Activated CD4-positive, alpha-beta T cell treated with anti-CD3 and anti-CD28 coated beads for 36 hours (primary cell): ENCODE measurements at regions of chr5 and their contacts with region 1.

Region 1: DNA sequence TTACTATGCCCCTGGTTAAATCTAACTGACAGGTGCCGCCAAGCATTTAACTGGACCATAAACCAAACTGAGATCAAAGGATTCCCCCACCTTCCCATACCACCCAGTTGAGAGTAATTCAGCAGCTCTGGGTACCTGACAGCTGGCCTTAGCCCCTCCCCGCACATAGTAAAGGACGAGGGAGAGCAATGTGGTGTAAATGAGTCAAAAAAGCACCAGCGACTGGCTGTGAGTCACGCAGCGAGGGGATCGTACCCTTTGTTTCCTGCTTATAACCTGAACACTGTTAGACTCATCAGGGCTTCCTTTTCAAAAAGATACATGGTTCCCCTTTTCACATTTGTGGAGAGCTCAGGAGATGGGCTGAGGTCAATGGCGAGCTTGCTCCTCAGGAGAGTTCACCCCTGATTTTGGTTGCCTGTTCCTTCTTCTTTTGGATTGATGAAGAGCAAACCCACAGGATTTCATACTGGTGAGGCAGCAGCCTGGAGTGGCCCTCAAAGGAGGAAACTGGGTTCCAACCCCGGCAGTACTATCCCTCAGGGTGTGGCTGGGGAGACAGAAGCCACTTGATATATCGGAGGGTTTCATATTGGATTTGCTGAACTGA is 71.5 kb downstream of the ANKRD33B start:
- DNase-seq: peak; percentile 91
- ATAC-seq: peak; percentile 91
- H3K4me3 Mint-ChIP-seq: peak overlapping the region; percentile 38
- H3K27ac Mint-ChIP-seq: peak overlapping the region; percentile 87
- H3K4me1 Mint-ChIP-seq: peaks cover 56% of the 10 kb centered on the region
- H3K27me3 Mint-ChIP-seq: peaks cover 2% of the 10 kb centered on the region

Region 2: DNA sequence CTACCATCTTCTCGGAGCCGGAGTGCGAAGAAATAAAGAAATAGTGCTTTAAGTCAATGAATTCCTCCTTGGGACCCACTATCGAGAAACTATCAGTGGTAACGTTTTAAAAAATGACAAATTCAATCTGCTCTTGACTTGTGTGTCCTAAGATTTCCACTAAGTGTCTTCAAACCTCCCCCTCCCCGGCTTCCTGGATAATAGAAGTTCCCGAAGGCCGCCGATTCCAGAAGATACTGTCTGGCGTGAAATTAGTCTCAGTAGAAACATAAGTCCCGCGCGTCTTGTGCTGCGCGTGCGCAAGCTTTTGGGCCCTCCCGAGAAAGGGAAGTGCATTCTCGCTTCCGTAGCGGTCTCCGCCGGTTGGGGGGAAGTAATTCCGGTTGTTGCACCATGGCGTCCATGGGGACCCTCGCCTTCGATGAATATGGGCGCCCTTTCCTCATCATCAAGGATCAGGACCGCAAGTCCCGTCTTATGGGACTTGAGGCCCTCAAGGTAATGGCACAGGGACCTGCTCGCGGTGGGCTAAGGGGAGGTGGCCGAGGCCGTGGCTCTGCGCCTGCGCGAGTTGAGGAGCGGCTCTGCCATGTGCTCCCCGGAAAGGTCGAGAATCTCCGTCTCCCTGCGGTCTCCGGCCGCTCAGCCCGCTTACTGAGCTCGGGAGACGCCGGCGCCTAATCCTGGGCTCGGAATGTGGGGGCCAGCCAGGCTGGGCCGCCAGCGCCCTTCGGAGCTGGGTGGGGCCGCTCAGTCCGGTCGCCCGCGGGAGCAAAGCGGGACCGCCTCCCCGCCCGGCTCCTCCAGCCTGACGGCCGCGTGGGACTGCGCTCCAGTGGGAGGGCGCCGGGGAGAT is 385.2 kb before region 1 on chr5 and contains the start of gene CCT5:
- CTCF ChIA-PET with region 1: no interaction called
- POLR2A ChIA-PET with region 1: no interaction called
- intact Hi-C with region 1: loop called in 1 of 2 experiments (anchors 1 kb)
- DNase-seq: peak; percentile 93
- ATAC-seq: peak; percentile 82
- H3K4me3 Mint-ChIP-seq: peak within 1 kb of the TSS; percentile 92
- H3K27ac Mint-ChIP-seq: peak within 1 kb of the TSS; percentile 100
- H3K4me1 Mint-ChIP-seq: peaks cover 47% of the 10 kb centered on the region
- H3K27me3 Mint-ChIP-seq: no peaks in the 10 kb centered on the region
- total RNA-seq, gene CCT5: 347 to 461 TPM

Region 3: GRCh38 chr5:10334831-10335230 is 300.5 kb before region 1 on chr5:
- CTCF ChIA-PET with region 1: no interaction called
- POLR2A ChIA-PET with region 1: no interaction called
- intact Hi-C with region 1: no loop called
- DNase-seq: no peak
- ATAC-seq: no peak
- H3K4me3 Mint-ChIP-seq: no peak overlapping the region
- H3K27ac Mint-ChIP-seq: no peak overlapping the region
- H3K4me1 Mint-ChIP-seq: peaks cover 5% of the 10 kb centered on the region
- H3K27me3 Mint-ChIP-seq: peaks cover 36% of the 10 kb centered on the region

Region 4: GRCh38 chr5:10353241-10354047 is 281.9 kb before region 1 on chr5 and contains the start of gene MARCHF6:
- CTCF ChIA-PET with region 1: interaction called, 4 read pairs
- POLR2A ChIA-PET with region 1: no interaction called
- intact Hi-C with region 1: loop called (anchors 1 to 10 kb)
- DNase-seq: peak; percentile 98
- ATAC-seq: peak; percentile 81
- H3K4me3 Mint-ChIP-seq: peak within 1 kb of the TSS; percentile 97
- H3K27ac Mint-ChIP-seq: peak within 1 kb of the TSS; percentile 99
- H3K4me1 Mint-ChIP-seq: peaks cover 39% of the 10 kb centered on the region
- H3K27me3 Mint-ChIP-seq: no peaks in the 10 kb centered on the region
- total RNA-seq, gene MARCHF6: 67.3 to 92.2 TPM

Region 5: GRCh38 chr5:10595678-10596309 is 39.6 kb before region 1 on chr5:
- CTCF ChIA-PET with region 1: no interaction called
- POLR2A ChIA-PET with region 1: no interaction called
- intact Hi-C with region 1: loop called (anchors 1 to 5 kb)
- DNase-seq: peak; percentile 71
- ATAC-seq: peak; percentile 87
- H3K4me3 Mint-ChIP-seq: no peak overlapping the region
- H3K27ac Mint-ChIP-seq: no peak overlapping the region
- H3K4me1 Mint-ChIP-seq: peaks cover 40% of the 10 kb centered on the region
- H3K27me3 Mint-ChIP-seq: peaks cover 14% of the 10 kb centered on the region

Region 6: GRCh38 chr5:10684303-10685086 is 49.1 kb after region 1 on chr5:
- CTCF ChIA-PET with region 1: interaction called, 3 read pairs
- POLR2A ChIA-PET with region 1: no interaction called
- intact Hi-C with region 1: loop called in 1 of 2 experiments (anchors 2 kb)
- DNase-seq: no peak
- ATAC-seq: peak; percentile 42
- H3K4me3 Mint-ChIP-seq: no peak overlapping the region
- H3K27ac Mint-ChIP-seq: peak overlapping the region; percentile 30
- H3K4me1 Mint-ChIP-seq: peaks cover 5% of the 10 kb centered on the region
- H3K27me3 Mint-ChIP-seq: no peaks in the 10 kb centered on the region

Region 7: DNA sequence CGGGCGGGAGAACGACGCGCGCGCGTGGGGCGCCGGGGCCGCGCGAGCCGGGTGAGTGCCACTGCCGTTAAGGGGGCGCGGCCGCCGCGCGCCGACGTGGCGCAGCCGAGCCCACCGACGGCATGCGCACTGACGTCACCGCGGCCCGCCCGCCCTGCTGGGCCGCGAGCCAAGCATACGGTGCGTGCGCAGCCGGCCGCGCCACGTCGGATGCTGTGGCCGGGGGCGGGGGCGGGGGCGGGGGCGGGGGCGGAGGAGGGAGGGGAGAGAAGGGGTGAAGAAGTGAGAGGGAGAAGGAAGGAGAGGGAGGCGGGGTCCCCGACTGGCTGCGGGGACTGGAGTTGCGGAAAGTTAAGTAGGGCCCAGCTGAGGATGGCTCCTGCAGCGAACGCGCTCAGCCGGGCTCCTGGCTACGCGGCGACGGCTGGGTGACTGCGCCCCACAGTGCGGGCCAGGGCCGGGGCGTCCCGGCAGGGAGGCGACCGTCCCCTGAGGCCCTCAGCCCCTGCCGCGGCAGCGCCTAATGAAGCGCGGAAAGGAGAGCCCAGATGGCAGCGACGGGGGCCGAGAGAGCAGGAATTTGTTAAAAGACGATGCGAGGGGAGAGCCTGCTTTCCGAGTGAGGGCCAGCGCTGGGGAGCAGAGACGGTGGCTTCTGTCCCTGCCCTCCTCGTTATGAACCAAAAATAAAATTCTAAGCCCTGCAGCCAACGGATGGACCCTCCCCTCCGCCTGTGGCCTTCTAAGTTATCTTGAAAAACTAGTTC is 126.0 kb after region 1 on chr5 and contains the start of gene DAP:
- CTCF ChIA-PET with region 1: no interaction called
- POLR2A ChIA-PET with region 1: no interaction called
- intact Hi-C with region 1: loop called (anchors 2 to 5 kb)
- DNase-seq: peak; percentile 92
- ATAC-seq: peak; percentile 82
- H3K4me3 Mint-ChIP-seq: peak within 1 kb of the TSS; percentile 83
- H3K27ac Mint-ChIP-seq: peak within 1 kb of the TSS; percentile 90
- H3K4me1 Mint-ChIP-seq: peaks cover 49% of the 10 kb centered on the region
- H3K27me3 Mint-ChIP-seq: peaks cover 3% of the 10 kb centered on the region
- total RNA-seq, gene DAP: 41.4 to 44.0 TPM

Region 8: GRCh38 chr5:10849278-10849677 is 213.9 kb after region 1 on chr5:
- CTCF ChIA-PET with region 1: no interaction called
- POLR2A ChIA-PET with region 1: no interaction called
- intact Hi-C with region 1: no loop called
- DNase-seq: no peak
- ATAC-seq: no peak
- H3K4me3 Mint-ChIP-seq: no peak overlapping the region
- H3K27ac Mint-ChIP-seq: no peak overlapping the region
- H3K4me1 Mint-ChIP-seq: no peaks in the 10 kb centered on the region
- H3K27me3 Mint-ChIP-seq: peaks cover 10% of the 10 kb centered on the region

Region 9: DNA sequence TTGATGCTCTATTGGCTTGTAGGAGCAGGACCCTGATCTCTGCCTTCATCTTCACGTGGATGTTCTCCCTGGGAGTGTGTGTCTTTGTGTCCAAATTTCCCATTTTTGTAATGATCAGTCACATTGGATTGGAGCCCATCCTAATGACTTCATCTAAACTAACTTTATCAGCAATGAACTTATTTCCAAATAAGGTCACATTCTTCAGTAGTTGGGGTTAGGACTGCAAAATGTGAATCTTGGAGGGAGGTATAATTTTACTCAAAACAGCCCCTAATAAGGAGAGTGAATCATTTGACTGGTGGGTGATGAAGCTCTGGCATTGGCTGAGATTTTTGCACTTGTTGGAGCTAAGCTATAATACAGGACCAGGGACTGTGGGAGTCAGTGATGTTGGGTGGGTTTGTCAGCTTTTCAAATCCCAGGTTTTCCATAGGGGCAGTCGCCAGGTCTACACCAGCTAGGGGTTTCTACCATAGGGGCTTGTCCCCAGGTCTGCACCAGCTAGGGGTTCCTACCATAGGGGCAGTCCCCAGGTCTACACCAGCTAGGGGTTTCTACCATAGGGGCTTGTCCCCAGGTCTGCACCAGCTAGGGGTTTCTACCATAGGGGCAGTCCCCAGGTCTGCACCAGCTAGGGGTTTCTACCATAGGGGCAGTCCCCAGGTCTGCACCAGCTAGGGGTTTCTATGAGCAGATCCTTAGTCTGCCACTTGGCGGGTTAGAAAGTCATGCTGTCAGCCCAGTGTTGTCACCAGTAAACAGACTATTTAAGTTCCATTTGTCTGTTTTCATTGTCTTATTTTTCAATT is 508.3 kb after region 1 on chr5:
- CTCF ChIA-PET with region 1: no interaction called
- POLR2A ChIA-PET with region 1: no interaction called
- intact Hi-C with region 1: loop called in 1 of 2 experiments (anchors 5 kb)
- DNase-seq: peak; percentile 85
- ATAC-seq: peak; percentile 97
- H3K4me3 Mint-ChIP-seq: no peak overlapping the region
- H3K27ac Mint-ChIP-seq: peak overlapping the region; percentile 4
- H3K4me1 Mint-ChIP-seq: peaks cover 8% of the 10 kb centered on the region
- H3K27me3 Mint-ChIP-seq: peaks cover 13% of the 10 kb centered on the region